Heart left ventricle (tissue), 16 donors: ENCODE measurements at regions of chr13 and their contacts with region 1.

Region 1: DNA sequence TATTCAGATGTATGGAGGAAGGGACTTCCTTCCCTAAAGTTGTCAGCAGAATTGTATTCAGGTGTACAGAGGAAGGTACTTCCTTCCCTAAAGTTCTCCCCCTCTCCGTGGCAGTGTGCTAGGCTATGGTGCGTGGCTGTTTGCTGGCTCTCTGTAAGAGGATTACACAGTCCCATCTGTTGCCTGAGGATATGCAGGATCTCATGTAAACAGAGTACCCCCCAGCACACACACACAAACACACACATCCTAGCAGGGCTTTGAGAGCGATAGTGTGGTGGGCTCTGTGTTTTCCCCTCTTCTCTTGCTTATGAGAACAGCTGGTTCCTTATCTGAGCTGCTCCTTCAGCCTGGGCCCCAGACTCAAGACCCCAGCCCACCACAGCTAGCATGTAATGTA is 10.3 kb downstream of the NEK5 start:
- DNase-seq: no peak
- ATAC-seq: no peak
- H3K4me3 ChIP-seq: no peak overlapping the region
- H3K27ac ChIP-seq: no peak overlapping the region
- H3K4me1 ChIP-seq: no peaks in the 10 kb centered on the region
- H3K27me3 ChIP-seq: no peaks in the 10 kb centered on the region
- CTCF ChIP-seq: no peak
- POLR2A ChIP-seq: no peak

Region 2: DNA sequence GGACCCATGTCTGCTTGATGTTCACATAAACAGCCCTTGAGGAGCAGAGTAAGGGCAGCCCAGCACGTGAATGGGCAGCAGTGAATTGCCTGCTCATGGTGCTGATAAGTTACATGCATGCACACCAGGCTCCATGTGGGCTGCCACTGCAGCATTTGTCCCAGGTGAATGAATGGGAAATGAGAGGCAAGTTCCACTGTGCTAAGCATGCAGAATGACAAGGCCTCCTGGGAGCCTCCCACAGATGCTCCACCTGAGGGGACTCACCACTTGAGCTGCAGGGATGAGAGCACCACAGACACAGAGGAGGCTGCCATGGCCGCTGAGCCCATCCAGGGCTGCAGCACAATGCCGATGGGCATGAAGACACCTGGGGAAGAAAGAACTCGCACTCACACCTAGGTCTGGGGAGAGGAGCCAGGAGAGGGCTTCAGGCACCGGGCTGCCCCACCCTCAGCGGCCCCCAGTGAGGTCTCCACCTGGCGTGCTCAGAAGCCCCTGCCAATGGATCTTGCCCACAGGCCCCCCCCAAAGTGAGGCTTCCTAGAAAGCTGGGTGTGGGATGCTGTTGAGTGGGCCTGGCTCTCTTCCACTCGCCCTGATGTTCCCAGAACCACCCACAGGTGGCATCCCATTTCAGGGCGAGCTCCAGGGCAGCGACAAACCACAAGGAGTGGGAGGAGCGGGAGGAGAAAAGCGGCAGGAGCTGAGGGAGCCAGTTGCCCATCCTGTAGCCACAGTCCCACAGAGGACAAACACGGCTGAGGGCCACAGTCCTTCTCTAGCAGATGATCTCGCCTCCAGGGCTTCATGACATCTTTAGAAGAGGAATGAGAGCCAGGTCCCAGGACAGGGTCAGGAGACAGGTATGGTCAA is 183.0 kb before region 1 on chr13:
- intact Hi-C with region 1: loop called in 1 of 10 experiments (anchors 10 kb)
- DNase-seq: no peak
- ATAC-seq: peak in 2 of 4 donors; percentile 36 to 56
- H3K4me3 ChIP-seq: no peak overlapping the region
- H3K27ac ChIP-seq: no peak overlapping the region
- H3K4me1 ChIP-seq: no peaks in the 10 kb centered on the region
- H3K27me3 ChIP-seq: no peaks in the 10 kb centered on the region
- CTCF ChIP-seq: peak in 11 of 12 donors; percentile 13 to 58 (median 30)
- POLR2A ChIP-seq: no peak

Region 3: DNA sequence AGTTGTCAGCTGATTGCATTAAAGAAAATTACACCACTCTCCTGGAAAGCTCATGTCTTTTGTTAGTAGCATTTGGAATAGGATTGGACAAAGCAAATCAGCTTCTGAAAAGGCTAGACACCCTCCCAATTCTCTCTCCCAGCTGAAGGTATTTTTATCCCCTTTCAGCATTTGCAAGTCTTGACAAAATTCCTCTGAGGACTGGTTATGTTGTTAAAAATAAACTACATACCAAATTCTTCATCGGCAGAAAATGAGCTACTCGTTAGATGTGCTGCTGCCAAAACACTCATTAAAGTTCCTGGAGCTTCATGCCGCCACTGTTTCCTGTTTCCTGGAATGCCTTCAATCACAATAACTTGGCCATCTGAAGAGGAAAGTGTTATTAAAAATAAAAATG is 57.0 kb before region 1 on chr13:
- intact Hi-C with region 1: loop called in 1 of 10 experiments (anchors 10 kb)
- DNase-seq: peak in 1 of 5 donors; percentile 16
- ATAC-seq: peak in 3 of 4 donors; percentile 34 to 93 (median 37)
- H3K4me3 ChIP-seq: no peak overlapping the region
- H3K27ac ChIP-seq: peak overlapping the region in 10 of 12 donors; percentile 9 to 90 (median 60)
- H3K4me1 ChIP-seq: peaks cover 0 to 17% (median 7%) of the 10 kb centered on the region in 12 donors
- H3K27me3 ChIP-seq: no peaks in the 10 kb centered on the region
- CTCF ChIP-seq: no peak
- POLR2A ChIP-seq: no peak